Prostate gland (tissue), 2 donors: ENCODE measurements at regions of chr16 and their contacts with region 1.

Region 1: DNA sequence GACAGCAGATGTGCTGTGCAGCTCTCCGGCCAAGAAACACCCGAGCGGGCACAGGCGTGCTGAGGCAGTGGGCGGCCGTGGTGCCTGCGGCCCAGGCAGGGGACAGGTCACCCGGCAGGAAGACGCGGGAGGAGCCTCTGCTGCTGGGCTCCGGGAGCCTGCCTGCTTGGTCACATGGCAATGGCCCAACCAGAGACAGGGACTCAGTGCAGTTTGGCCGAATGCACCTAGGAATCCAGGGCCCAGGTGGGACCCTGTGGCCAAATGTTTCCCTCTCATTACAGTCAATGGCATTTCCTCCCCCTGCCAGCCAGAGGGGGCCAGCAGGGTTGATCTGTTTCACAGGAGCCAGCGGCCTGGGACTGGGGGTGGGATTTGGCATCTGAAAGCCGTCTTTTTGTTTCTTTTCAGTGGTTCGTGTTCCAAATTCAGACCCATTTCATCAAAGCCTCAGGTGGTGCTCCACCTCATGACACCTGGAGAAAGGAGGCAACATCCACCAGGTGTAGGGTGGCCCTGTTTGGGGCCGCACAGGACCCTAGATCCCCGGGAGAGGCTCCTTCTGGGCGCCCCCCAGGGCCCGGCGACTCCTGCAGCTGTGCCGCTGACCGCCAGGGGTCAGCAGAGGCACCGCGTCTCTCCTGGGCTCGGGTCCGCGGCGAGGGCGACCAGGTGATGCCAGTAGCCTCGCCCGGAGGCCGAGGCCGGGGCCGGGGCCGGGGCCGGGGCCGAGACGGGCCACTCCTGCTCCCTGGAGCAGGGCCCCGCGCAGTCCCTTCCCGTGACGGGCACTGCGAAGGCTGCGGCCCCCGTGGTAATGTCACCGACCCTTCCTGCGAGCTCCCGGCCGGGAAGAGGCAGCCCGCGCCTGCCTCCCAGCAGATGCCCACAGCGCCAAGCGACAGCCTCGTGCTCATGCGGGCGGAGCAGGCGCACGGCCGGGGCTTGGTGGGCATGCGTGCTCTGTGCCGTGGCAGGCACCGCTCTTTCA is 118.5 kb downstream of the C16orf78 start:
- DNase-seq: peak; percentile 59
- H3K4me3 ChIP-seq: peak overlapping the region; percentile 23 to 35
- H3K27ac ChIP-seq: no peak overlapping the region
- H3K4me1 ChIP-seq: peaks cover 4% of the 10 kb centered on the region
- H3K27me3 ChIP-seq: no peaks in the 10 kb centered on the region
- CTCF ChIP-seq: peak; percentile 79 to 91 (median 85)
- POLR2A ChIP-seq: no peak

Region 2: DNA sequence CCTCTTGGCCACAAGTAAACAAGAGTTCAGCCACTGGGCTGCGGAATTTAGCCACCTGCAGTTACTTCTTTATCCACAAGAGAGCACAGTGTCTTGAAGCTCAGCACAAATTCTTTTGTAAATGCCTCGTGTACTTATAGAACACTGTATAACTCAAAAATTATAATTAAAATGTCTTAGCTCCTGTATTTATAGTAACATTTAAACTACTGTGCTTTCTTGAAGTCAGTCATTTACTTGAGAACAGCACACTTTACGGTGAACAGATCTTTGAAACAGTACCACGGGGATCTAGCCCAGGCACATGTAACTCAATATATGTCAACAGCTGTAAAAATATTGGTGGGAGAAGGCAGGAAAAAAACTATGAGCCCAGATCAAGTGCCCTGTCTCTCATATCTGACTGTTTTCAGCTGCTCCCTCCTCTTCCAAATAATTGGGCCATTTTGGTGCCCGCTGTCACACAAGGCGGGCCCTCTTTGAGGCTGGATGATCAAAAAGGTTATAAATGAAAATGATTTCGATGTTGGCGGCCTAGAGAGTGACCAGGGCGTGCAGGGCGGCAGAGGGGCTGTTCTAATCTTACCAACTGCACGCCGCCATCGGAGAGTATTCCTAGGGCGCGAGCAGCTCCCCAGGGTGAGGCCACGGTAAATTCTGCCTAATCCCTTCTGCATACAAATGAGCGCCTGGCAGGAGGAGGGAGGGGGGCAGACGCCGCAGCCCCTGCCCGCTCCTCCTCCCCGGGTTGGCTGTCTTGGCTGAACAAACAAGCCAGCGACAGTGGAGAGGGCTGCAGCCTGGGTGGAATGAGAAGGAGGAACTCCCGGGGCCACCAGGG is 64.8 kb after region 1 on chr16:
- intact Hi-C with region 1: no loop called
- DNase-seq: no peak
- H3K4me3 ChIP-seq: no peak overlapping the region
- H3K27ac ChIP-seq: no peak overlapping the region
- H3K4me1 ChIP-seq: no peaks in the 10 kb centered on the region
- H3K27me3 ChIP-seq: no peaks in the 10 kb centered on the region
- CTCF ChIP-seq: peak in 3 of 4 experiments; percentile 16 to 43 (median 26)
- POLR2A ChIP-seq: no peak

Region 3: DNA sequence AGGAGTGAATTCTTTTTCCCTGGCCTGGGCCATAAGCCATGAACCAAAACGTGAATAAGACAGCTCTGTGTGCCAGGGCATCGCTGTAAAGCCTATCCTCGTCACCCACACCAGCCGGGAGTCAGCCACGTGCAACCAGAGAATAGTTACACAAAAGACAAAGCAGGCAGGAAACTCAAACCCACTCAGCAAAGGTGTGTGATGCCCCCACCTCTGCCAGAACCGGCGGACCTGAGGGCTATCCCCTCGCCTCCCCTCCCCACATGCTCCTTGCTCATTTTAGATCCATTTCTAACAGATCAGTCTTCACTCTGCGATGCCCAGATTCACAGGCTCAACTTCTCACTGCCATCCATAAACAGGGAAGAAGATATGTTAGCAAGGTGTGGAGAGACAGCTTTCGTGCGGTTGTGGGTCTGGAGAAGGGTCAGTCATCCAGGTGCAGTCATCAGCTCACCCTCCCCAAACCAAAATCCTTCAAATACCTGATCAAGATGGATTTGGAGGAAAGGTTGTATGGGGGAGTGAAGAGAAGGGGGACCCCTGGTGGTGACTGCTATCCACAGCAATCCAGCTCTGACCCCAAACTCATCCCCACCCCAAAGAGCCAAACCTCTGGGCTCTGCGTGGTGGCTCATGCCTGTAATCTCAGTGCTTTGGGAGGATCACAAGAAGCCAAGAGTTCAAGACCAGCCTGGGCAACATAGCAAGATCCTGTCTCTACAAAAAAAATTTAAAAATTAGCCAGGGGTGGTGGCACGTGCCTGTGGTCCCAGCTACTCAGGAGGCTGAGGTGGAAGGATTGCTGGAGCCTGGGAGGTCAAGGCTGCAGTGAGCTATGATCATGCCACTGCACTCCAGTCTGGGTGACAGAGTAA is 100.7 kb after region 1 on chr16:
- intact Hi-C with region 1: loop called (anchors 5 kb)
- DNase-seq: no peak
- H3K4me3 ChIP-seq: no peak overlapping the region
- H3K27ac ChIP-seq: no peak overlapping the region
- H3K4me1 ChIP-seq: no peaks in the 10 kb centered on the region
- H3K27me3 ChIP-seq: no peaks in the 10 kb centered on the region
- CTCF ChIP-seq: peak in 3 of 4 experiments; percentile 58 to 61 (median 59)
- POLR2A ChIP-seq: no peak

Region 4: GRCh38 chr16:49652456-49653172 is 160.5 kb after region 1 on chr16:
- intact Hi-C with region 1: no loop called
- DNase-seq: no peak
- H3K4me3 ChIP-seq: no peak overlapping the region
- H3K27ac ChIP-seq: peak overlapping the region in 1 of 2 donors; percentile 54
- H3K4me1 ChIP-seq: no peaks in the 10 kb centered on the region
- H3K27me3 ChIP-seq: no peaks in the 10 kb centered on the region
- CTCF ChIP-seq: no peak
- POLR2A ChIP-seq: no peak

Region 5: GRCh38 chr16:49755313-49755620 is 263.2 kb after region 1 on chr16:
- intact Hi-C with region 1: loop called (anchors 5 kb)
- DNase-seq: peak; percentile 16
- H3K4me3 ChIP-seq: peak overlapping the region; percentile 14 to 18
- H3K27ac ChIP-seq: peak overlapping the region; percentile 37 to 42
- H3K4me1 ChIP-seq: no peaks in the 10 kb centered on the region
- H3K27me3 ChIP-seq: no peaks in the 10 kb centered on the region
- CTCF ChIP-seq: peak in 3 of 4 experiments; percentile 24 to 46 (median 45)
- POLR2A ChIP-seq: no peak